ENCODE measurements at regions of chr1 and their contacts with region 1.

Region 1: GRCh38 chr1:22089787-22090186 is 37.3 kb downstream of the CDC42 start:
- DNase-seq: no peak
- H3K4me3 Mint-ChIP-seq: no peak overlapping the region
- H3K27ac Mint-ChIP-seq: peak overlapping the region; percentile 25
- H3K4me1 Mint-ChIP-seq: peaks cover 36% of the 10 kb centered on the region
- H3K27me3 Mint-ChIP-seq: no peaks in the 10 kb centered on the region
- CTCF ChIP-seq: no peak

Region 2: GRCh38 chr1:21457654-21458053 is 632.1 kb before region 1 on chr1:
- CTCF ChIA-PET with region 1: no interaction called
- intact Hi-C with region 1: no loop called
- DNase-seq: no peak
- H3K4me3 Mint-ChIP-seq: no peak overlapping the region
- H3K27ac Mint-ChIP-seq: no peak overlapping the region
- H3K4me1 Mint-ChIP-seq: peaks cover 14% of the 10 kb centered on the region
- H3K27me3 Mint-ChIP-seq: no peaks in the 10 kb centered on the region
- CTCF ChIP-seq: no peak

Region 3: DNA sequence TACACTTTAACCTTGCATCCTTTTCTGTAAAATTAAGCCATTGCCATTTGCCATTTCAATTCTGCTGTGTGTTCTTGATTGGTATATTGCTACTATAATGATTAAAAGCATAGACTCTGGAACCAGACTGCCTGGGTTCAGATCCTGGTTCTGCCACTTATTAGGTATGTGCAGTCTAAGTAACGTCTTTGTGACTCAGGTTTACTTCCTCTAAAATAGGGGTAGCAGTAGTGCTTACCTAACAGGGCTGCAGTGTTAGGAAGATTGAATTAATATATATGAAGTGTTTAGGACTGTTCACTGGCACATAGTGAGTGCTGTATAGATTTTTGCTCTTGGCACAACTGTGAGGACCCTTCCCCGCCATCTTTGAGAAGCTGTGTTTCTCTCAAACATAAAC is 32.9 kb before region 1 on chr1:
- CTCF ChIA-PET with region 1: no interaction called
- intact Hi-C with region 1: loop called (anchors 5 kb)
- DNase-seq: no peak
- H3K4me3 Mint-ChIP-seq: no peak overlapping the region
- H3K27ac Mint-ChIP-seq: no peak overlapping the region
- H3K4me1 Mint-ChIP-seq: peaks cover 9% of the 10 kb centered on the region
- H3K27me3 Mint-ChIP-seq: no peaks in the 10 kb centered on the region
- CTCF ChIP-seq: no peak

Measured in Calu3 (cell line).